ENCODE measurements at regions of chr22 and their contacts with region 1.

Region 1: DNA sequence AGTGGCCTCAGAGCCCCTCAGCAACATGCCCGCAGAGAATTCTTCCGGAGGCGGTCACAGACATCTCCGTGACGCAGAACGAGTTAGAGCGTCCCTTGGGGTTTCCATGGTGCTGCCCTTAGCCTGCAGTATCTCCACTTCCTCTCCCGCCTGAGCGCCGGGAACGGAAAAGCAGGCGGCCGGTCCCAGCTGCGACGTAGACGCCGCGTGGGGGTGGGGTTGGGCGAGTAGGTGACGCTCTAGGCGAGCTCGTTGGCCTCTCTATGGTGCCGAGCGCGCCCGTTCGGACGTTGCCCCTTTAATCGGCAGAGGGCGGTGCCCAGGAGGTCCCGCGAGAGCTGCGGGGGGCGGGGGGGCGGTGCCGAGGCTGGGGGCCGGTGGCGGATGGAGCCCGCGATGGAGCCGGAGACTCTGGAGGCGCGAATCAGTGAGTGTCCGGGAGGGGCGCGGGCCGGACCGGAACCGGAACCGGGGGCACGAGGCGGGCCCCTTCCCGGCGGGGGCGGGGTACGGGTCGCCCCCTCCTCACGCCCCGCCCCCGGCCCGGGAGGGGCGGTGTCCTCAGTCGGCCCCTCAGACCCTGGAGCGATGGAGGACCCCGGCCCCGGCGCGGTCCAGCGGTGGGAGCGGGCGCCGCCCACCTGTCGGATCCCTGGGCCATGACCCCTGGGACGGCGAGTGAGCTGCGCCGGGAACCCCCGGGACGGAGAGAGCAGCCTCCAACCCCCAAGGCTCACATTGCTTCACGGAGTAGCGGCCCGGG is at the start of gene GGA1:
- DNase-seq: peak; percentile 99
- ATAC-seq: peak; percentile 82
- H3K4me3 Mint-ChIP-seq: peak within 1 kb of the TSS; percentile 89
- H3K27ac Mint-ChIP-seq: peak within 1 kb of the TSS; percentile 99
- H3K4me1 Mint-ChIP-seq: peaks cover 51% of the 10 kb centered on the region
- H3K27me3 Mint-ChIP-seq: no peaks in the 10 kb centered on the region
- total RNA-seq, gene GGA1: 55.4 to 66.6 TPM

Region 2: DNA sequence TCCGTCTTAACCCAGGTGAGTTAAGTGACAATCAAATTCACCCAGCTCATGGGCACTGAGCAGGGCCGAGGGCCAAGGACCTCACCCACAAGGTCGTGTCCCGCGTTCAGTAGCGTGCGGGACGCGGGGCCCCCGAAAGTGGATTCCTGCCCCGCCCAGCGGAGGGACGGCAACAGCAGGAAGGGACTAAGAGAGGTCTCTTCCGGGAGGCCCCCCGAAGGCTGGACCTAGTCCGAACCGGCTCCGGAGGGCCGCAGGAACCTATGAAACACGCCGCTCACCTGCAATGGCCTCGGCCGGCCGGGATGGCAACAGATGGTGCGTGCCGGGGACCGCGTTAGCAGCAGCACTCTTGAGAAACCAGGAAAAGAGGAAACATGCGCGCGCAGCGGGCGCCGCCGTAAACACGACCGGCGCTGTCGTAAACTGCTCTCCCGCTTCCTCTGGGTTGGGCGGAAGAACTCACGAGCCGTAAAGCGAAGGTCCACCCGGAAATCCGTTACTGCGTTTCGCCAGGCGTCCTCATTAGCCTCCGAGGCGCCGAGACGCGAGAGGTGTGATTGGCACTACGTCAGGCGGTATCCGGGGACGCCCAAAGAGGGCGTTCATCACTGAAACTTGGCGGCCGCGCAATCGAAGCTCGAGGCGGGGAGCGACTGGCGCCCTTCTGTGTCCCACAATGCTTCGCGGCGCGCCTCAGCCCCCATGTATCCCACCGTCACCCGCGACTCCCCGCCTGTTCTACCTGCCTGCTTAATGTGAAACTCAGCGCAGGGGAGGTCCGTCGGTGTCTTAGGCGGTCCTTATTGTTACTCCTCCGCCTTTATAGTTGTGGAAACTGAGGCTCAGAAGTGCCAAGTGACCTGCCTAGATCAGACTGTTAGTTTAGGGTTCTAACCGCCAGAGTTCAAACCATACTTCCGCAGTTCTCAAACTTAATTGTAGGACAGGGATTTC is 1079.6 kb before region 1 on chr22 and contains the start of gene EIF3D:
- CTCF ChIA-PET with region 1: no interaction called
- POLR2A ChIA-PET with region 1: no interaction called
- intact Hi-C with region 1: loop called in 1 of 2 experiments (anchors 2 kb)
- DNase-seq: peak; percentile 99
- ATAC-seq: peak; percentile 96
- H3K4me3 Mint-ChIP-seq: peak within 1 kb of the TSS; percentile 82
- H3K27ac Mint-ChIP-seq: peak within 1 kb of the TSS; percentile 99
- H3K4me1 Mint-ChIP-seq: peaks cover 25% of the 10 kb centered on the region
- H3K27me3 Mint-ChIP-seq: no peaks in the 10 kb centered on the region
- total RNA-seq, gene EIF3D: 359 to 403 TPM

Region 3: GRCh38 chr22:37566903-37567820 is 41.5 kb before region 1 on chr22:
- CTCF ChIA-PET with region 1: interaction called, 29 read pairs
- POLR2A ChIA-PET with region 1: no interaction called
- intact Hi-C with region 1: no loop called
- DNase-seq: peak; percentile 96
- ATAC-seq: peak; percentile 93
- H3K4me3 Mint-ChIP-seq: peak overlapping the region; percentile 43
- H3K27ac Mint-ChIP-seq: peak overlapping the region; percentile 87
- H3K4me1 Mint-ChIP-seq: peaks cover 23% of the 10 kb centered on the region
- H3K27me3 Mint-ChIP-seq: peaks cover 19% of the 10 kb centered on the region

Region 4: GRCh38 chr22:37643225-37643847 is 34.7 kb after region 1 on chr22:
- CTCF ChIA-PET with region 1: interaction called, 10 read pairs
- POLR2A ChIA-PET with region 1: no interaction called
- intact Hi-C with region 1: loop called in 1 of 2 experiments (anchors 1 kb)
- DNase-seq: peak; percentile 93
- ATAC-seq: peak; percentile 79
- H3K4me3 Mint-ChIP-seq: no peak overlapping the region
- H3K27ac Mint-ChIP-seq: peak overlapping the region; percentile 75
- H3K4me1 Mint-ChIP-seq: peaks cover 37% of the 10 kb centered on the region
- H3K27me3 Mint-ChIP-seq: no peaks in the 10 kb centered on the region

Region 5: GRCh38 chr22:37696657-37697537 is 88.2 kb after region 1 on chr22 and contains the start of gene TRIOBP:
- CTCF ChIA-PET with region 1: interaction called, 3 read pairs
- POLR2A ChIA-PET with region 1: no interaction called
- intact Hi-C with region 1: loop called in 1 of 2 experiments (anchors 1 kb)
- DNase-seq: peak; percentile 98
- ATAC-seq: peak; percentile 99
- H3K4me3 Mint-ChIP-seq: peak within 1 kb of the TSS; percentile 71
- H3K27ac Mint-ChIP-seq: peak within 1 kb of the TSS; percentile 67
- H3K4me1 Mint-ChIP-seq: peaks cover 17% of the 10 kb centered on the region
- H3K27me3 Mint-ChIP-seq: no peaks in the 10 kb centered on the region
- total RNA-seq, gene TRIOBP: 23.3 to 26.1 TPM

Region 6: DNA sequence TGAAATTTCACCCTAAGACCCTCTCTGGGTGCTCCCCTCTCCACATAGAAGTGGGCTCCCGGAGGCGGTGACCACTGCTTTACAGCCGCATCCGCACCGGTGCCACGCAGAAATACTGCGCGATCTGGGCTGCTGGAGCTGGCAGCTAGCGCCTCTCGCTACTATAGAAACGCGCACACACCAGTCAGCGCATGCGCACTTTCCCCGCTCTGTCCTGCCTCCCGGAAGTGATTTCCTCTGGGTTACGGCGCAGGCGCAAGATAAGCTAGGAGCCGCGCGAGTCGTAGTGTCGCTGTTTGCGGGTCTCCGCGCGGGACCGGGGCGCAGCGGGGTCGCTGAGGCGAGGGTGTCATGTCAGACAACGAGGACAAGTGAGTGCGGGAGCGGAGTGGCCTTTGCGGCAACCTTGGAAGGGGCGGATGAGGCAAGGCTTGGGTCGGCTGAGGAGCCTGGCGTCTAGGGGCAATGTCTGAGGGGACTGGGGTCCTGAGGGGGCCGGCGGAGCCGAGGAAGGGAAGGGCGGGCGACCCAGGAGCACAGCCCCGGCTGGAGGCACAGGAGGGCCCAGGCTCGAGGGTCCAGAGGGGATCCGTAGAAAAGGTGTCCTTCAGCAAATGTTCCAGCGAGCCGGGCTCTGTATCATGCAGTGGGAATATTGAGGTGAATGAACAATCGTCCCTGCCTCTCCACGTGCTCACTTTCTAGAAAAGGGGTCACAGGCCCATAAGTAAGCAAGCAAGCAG is 344.9 kb after region 1 on chr22 and contains the starts of genes C22orf23 and POLR2F:
- CTCF ChIA-PET with region 1: interaction called, 5 read pairs
- POLR2A ChIA-PET with region 1: no interaction called
- intact Hi-C with region 1: loop called in 1 of 2 experiments (anchors 5 kb)
- DNase-seq: peak; percentile 98
- ATAC-seq: peak; percentile 98
- H3K4me3 Mint-ChIP-seq: peak within 1 kb of the TSS; percentile 86
- H3K27ac Mint-ChIP-seq: peak within 1 kb of the TSS; percentile 91
- H3K4me1 Mint-ChIP-seq: peaks cover 26% of the 10 kb centered on the region
- H3K27me3 Mint-ChIP-seq: peaks cover 11% of the 10 kb centered on the region
- total RNA-seq, gene C22orf23: 0.16 TPM in 1 of 2 experiments, not detected in the other
- total RNA-seq, gene POLR2F: 70.5 to 77.8 TPM

Region 7: GRCh38 chr22:39152511-39153219 is 1544.0 kb after region 1 on chr22 and contains the start of gene CBX7:
- CTCF ChIA-PET with region 1: no interaction called
- POLR2A ChIA-PET with region 1: no interaction called
- intact Hi-C with region 1: loop called in 1 of 2 experiments (anchors 5 kb)
- DNase-seq: peak; percentile 95
- ATAC-seq: peak; percentile 83
- H3K4me3 Mint-ChIP-seq: peak within 1 kb of the TSS; percentile 76
- H3K27ac Mint-ChIP-seq: peak within 1 kb of the TSS; percentile 72
- H3K4me1 Mint-ChIP-seq: peaks cover 40% of the 10 kb centered on the region
- H3K27me3 Mint-ChIP-seq: peaks cover 13% of the 10 kb centered on the region
- total RNA-seq, gene CBX7: 19.9 to 20.3 TPM